Activated CD4-positive, alpha-beta T cell treated with anti-CD3 and anti-CD28 coated beads, Interleukin-2, amount 10 ng/mL, durations not matched to agents 7 days and 5 days (primary cell): ENCODE measurements at regions of chr7 and their contacts with region 1.

Region 1: GRCh38 chr7:156949541-156950380 is at the start of gene NOM1:
- DNase-seq: peak; percentile 90
- H3K4me3 Mint-ChIP-seq: peak within 1 kb of the TSS; percentile 92
- H3K27ac Mint-ChIP-seq: peak within 1 kb of the TSS; percentile 89
- H3K4me1 Mint-ChIP-seq: peaks cover 31% of the 10 kb centered on the region
- H3K27me3 Mint-ChIP-seq: peaks cover 18% of the 10 kb centered on the region
- total RNA-seq, gene NOM1: 27.2 to 28.6 TPM

Region 2: GRCh38 chr7:156640257-156640948 is 309.4 kb before region 1 on chr7 and contains the start of gene RNF32:
- CTCF ChIA-PET with region 1: no interaction called
- POLR2A ChIA-PET with region 1: no interaction called
- DNase-seq: peak; percentile 97
- H3K4me3 Mint-ChIP-seq: peak within 1 kb of the TSS; percentile 84
- H3K27ac Mint-ChIP-seq: peak within 1 kb of the TSS; percentile 95
- H3K4me1 Mint-ChIP-seq: peaks cover 26% of the 10 kb centered on the region
- H3K27me3 Mint-ChIP-seq: peaks cover 23% of the 10 kb centered on the region
- total RNA-seq, gene RNF32: 2.2 TPM

Region 3: GRCh38 chr7:156842740-156843140 is 107.0 kb before region 1 on chr7:
- CTCF ChIA-PET with region 1: no interaction called
- POLR2A ChIA-PET with region 1: no interaction called
- DNase-seq: no peak
- H3K4me3 Mint-ChIP-seq: no peak overlapping the region
- H3K27ac Mint-ChIP-seq: no peak overlapping the region
- H3K4me1 Mint-ChIP-seq: peaks cover 2% of the 10 kb centered on the region
- H3K27me3 Mint-ChIP-seq: no peaks in the 10 kb centered on the region

Region 4: DNA sequence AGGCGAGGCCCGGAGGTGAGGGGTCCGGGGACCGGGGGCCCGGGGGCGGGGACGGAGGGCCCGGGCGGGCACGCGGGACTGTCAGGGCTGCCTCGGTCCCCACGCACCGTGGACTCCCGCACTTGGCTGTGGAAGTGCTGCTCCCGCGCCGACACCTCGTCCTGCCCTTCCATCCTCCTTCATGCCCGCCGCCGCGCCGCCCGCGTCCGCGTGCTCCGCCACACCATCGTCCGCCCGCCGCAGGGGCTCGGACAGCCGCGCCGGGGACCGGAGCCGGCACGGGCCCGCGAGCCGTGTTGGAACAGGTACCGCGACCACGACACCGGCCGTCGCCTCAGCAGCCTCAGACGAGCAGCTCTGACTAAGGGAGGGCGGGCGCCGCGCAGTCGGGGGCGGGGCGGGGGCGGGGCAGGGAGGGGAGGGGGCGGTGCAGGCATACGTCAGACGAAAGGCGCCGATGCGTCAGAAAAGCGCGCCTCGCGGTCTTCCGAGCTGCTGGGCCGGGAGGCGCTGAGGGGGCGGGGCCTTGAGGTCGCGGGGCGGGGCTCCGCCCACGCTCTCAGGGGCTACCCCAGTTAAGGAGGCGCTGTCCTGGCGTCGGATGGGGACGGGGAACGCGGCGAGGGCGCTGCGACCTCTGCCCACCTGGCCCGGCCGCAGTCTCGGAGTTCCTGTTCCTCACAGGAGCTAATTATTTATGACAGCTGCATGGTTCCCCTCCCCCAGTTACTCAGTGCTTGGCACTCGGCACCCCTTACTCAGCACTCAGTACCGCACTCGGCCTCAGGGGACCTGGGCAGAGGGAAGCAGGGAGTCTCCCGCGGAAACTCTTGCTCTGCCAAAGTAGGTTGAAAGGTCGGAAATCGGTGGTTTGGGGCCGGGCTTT is 56.7 kb before region 1 on chr7 and contains the start of gene LMBR1:
- CTCF ChIA-PET with region 1: interaction called, 13 read pairs
- POLR2A ChIA-PET with region 1: no interaction called
- DNase-seq: peak; percentile 90
- H3K4me3 Mint-ChIP-seq: peak within 1 kb of the TSS; percentile 88
- H3K27ac Mint-ChIP-seq: peak within 1 kb of the TSS; percentile 95
- H3K4me1 Mint-ChIP-seq: peaks cover 51% of the 10 kb centered on the region
- H3K27me3 Mint-ChIP-seq: no peaks in the 10 kb centered on the region
- total RNA-seq, gene LMBR1: 38.8 to 43.5 TPM

Region 5: GRCh38 chr7:156931957-156932381 is 17.8 kb before region 1 on chr7:
- CTCF ChIA-PET with region 1: interaction called, 21 read pairs
- POLR2A ChIA-PET with region 1: no interaction called
- DNase-seq: no peak
- H3K4me3 Mint-ChIP-seq: no peak overlapping the region
- H3K27ac Mint-ChIP-seq: no peak overlapping the region
- H3K4me1 Mint-ChIP-seq: peaks cover 17% of the 10 kb centered on the region
- H3K27me3 Mint-ChIP-seq: peaks cover 37% of the 10 kb centered on the region

Region 6: DNA sequence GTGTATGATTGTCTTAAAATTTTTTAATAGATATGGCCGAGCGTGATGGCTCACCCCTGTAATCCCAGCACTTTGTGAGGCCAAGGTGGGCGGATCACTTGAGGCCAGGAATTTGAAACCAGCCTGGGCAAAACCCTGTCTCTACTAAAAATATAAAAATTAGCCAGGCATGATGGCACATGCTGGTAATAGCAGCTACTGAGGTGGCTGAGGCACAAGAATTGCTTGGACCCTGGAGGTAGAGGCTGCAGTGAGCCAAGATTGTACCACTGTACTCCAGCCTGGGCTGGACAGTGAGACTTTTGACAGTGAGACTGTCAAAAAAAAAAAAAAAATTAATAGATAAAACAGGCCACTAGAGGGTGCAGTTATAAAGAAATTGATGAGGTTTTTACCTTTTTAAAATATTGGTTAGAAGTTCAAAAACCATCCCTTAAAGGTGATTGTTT is 20.2 kb after region 1 on chr7:
- CTCF ChIA-PET with region 1: interaction called, 10 read pairs
- POLR2A ChIA-PET with region 1: no interaction called
- DNase-seq: no peak
- H3K4me3 Mint-ChIP-seq: no peak overlapping the region
- H3K27ac Mint-ChIP-seq: no peak overlapping the region
- H3K4me1 Mint-ChIP-seq: no peaks in the 10 kb centered on the region
- H3K27me3 Mint-ChIP-seq: no peaks in the 10 kb centered on the region

Region 7: DNA sequence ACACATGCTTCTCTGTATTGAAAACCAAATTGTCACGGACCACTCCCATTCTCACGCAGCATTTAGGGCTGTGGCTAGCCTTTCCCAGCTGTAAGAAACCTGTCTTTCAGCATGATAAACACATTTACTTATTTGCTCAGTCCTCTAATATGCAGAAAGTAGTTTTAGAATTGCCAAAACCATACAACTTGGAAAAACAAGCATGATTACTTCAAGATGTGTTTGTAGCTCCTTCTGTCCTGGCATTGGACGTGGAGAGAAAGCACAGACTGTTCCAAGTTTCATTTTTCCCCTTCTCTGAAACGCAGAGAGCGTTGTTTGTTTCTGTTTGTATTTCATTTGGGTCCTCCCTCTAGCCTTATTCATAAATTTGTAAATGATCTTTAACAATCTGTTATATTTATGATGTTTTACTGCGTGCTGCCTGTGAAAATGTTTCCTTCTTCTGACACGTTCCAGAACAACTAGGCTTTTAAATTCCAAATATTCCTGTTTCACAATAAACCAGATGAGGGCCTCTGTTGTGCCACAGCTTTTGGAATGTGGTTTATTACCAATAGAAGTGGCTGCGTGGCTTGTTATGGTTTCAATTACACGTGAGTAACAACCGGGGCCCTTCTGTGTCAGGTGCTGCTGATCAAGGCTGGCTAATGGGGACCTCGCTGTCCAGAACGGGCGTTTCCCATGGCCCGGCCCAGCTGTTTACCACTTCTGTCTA is 34.6 kb after region 1 on chr7:
- CTCF ChIA-PET with region 1: no interaction called
- POLR2A ChIA-PET with region 1: no interaction called
- DNase-seq: no peak
- H3K4me3 Mint-ChIP-seq: no peak overlapping the region
- H3K27ac Mint-ChIP-seq: no peak overlapping the region
- H3K4me1 Mint-ChIP-seq: no peaks in the 10 kb centered on the region
- H3K27me3 Mint-ChIP-seq: no peaks in the 10 kb centered on the region